Endothelial cell of umbilical vein (primary cell): ENCODE measurements at regions of chr6 and their contacts with region 1.

Region 1: DNA sequence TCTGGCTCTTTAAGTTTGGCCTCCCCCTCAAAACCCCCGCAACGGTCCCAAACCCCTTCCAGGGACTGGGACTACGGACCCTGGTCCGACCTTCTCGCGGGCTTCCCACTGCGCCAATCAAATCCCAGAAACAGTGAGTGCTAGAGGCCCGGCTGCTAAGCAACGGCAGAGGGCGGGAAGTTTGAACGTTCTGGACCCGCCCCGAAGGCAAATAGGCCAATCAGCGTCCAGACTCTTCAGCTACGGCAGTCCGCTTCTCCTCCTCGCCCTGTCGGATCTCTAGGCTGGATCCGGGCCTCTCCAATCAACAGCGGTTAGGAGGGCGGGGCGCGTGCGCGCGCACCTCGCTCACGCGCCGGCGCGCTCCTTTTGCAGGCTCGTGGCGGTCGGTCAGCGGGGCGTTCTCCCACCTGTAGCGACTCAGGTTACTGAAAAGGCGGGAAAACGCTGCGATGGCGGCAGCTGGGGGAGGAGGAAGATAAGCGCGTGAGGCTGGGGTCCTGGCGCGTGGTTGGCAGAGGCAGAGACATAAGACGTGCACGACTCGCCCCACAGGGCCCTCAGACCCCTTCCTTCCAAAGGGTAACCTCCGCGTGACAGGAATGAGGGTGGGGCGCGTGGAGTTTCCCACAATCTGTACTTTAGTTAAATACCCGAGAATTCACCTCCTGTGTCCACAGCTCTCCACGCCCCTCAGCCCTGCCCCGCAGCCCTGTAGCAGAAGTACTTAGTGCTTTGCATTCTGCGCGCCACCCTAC is at the start of gene MSH5:
- DNase-seq: peak; percentile 100
- H3K4me3 ChIP-seq: peak within 1 kb of the TSS; percentile 23 to 76 (median 61)
- H3K27ac ChIP-seq: peak within 1 kb of the TSS; percentile 94
- H3K4me1 ChIP-seq: peaks cover 31% of the 10 kb centered on the region
- H3K27me3 ChIP-seq: no peaks in the 10 kb centered on the region
- CTCF ChIP-seq: no peak
- POLR2A ChIP-seq: peak; percentile 65
- total RNA-seq, gene MSH5: 43.2 and 43.8 TPM in 2 replicates

Region 2: DNA sequence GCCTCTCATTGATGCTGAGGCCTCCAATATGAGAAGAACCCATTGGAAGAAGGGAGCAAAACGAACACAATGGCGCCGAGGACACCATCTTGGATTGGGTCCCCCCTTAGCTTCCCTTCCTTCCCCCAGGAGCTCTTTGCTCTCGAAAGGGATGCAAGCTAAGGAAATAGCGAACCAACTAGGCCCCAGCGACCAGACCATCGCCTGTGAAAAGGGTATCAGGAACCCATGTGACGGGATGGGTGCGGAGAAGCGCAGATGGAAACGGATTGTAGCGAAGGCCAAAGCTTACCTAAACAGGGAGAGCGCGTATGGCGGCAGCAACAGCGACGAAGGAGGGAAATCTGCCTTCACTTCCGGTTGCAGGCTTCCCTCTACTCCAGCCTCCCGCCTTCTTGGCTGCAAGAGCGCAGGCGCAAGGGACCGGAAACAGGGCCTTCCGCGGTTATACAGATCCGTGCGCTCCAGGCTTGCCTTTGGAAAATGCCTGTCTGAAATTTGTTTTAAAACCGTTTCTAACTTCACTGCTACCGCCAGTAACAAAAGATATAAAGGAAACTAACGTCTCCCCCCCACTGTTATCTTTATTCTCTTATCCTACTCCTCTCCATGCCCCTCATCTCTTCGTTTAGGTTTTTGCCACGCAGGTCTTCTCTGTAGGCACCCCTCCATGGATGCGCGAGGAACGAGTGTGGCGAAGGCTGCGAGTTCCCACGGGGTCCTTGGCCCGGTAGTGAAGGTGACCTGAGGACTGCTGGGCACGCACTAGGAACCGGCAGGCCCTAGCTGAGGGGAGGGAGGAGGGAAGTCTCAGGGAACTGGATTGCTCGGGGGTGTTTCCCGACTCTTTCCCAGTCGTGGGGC is 197.9 kb before region 1 on chr6 and contains the start of gene DDX39B:
- CTCF ChIA-PET with region 1: no interaction called
- POLR2A ChIA-PET with region 1: no interaction called
- dilution Hi-C with region 1: no loop called
- intact Hi-C with region 1: loop called (anchors 10 kb)
- DNase-seq: peak; percentile 97
- H3K4me3 ChIP-seq: peak within 1 kb of the TSS; percentile 59 to 95 (median 80)
- H3K27ac ChIP-seq: peak within 1 kb of the TSS; percentile 85
- H3K4me1 ChIP-seq: peaks cover 28% of the 10 kb centered on the region
- H3K27me3 ChIP-seq: no peaks in the 10 kb centered on the region
- CTCF ChIP-seq: no peak
- POLR2A ChIP-seq: peak; percentile 96
- total RNA-seq, gene DDX39B: 453 and 481 TPM in 2 replicates

Region 3: GRCh38 chr6:31652925-31653718 is 86.7 kb before region 1 on chr6:
- CTCF ChIA-PET with region 1: interaction called, 3 read pairs
- POLR2A ChIA-PET with region 1: no interaction called
- dilution Hi-C with region 1: no loop called
- intact Hi-C with region 1: loop called (anchors 2 kb)
- DNase-seq: no peak
- H3K4me3 ChIP-seq: peak overlapping the region; percentile 23 to 80 (median 62)
- H3K27ac ChIP-seq: peak overlapping the region; percentile 83
- H3K4me1 ChIP-seq: peaks cover 23% of the 10 kb centered on the region
- H3K27me3 ChIP-seq: no peaks in the 10 kb centered on the region
- CTCF ChIP-seq: no peak
- POLR2A ChIP-seq: no peak

Region 4: DNA sequence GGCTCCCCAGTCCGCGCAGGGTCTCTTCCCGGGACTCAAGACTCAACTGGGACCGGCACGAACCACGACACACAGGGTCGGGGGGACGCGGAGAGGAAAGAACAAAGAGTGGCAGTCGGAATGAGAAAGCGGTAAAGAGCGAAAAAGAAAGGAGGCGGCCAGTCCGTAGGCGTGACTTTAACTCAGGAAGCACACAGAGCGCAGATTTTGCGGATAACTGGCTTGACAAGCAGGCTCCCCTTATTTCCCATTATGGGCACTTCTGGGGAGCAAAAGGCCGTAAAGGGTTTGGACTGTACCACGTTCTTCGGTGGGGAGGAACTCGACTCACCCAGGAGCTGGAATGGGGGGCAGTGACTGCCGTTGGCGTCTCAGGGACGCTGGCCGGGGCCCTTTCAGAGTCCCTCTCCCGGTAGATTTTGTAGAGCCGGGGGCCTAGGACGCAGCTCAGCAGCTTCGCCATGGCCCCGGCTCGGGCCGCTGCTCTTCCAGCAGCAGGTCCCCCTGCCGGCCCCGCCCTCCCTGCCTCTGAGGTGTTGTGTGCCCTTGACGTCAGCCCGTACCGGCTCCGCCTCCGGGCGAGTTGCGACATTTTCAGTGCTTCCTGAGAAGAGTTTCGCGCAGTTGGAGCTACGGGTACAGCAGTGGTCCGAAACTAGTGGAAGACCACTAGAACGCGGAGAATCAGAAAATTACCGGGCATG is 36.8 kb before region 1 on chr6 and contains the start of gene ABHD16A:
- CTCF ChIA-PET with region 1: interaction called, 3 read pairs
- POLR2A ChIA-PET with region 1: interaction called, 5 read pairs
- dilution Hi-C with region 1: no loop called
- intact Hi-C with region 1: loop called (anchors 2 kb)
- DNase-seq: peak; percentile 99
- H3K4me3 ChIP-seq: peak within 1 kb of the TSS; percentile 59 to 80 (median 74)
- H3K27ac ChIP-seq: peak within 1 kb of the TSS; percentile 77
- H3K4me1 ChIP-seq: peaks cover 11% of the 10 kb centered on the region
- H3K27me3 ChIP-seq: no peaks in the 10 kb centered on the region
- CTCF ChIP-seq: peak in 1 of 2 donors; percentile 3
- POLR2A ChIP-seq: peak; percentile 97
- total RNA-seq, gene ABHD16A: 41.3 and 48.9 TPM in 2 replicates

Region 5: DNA sequence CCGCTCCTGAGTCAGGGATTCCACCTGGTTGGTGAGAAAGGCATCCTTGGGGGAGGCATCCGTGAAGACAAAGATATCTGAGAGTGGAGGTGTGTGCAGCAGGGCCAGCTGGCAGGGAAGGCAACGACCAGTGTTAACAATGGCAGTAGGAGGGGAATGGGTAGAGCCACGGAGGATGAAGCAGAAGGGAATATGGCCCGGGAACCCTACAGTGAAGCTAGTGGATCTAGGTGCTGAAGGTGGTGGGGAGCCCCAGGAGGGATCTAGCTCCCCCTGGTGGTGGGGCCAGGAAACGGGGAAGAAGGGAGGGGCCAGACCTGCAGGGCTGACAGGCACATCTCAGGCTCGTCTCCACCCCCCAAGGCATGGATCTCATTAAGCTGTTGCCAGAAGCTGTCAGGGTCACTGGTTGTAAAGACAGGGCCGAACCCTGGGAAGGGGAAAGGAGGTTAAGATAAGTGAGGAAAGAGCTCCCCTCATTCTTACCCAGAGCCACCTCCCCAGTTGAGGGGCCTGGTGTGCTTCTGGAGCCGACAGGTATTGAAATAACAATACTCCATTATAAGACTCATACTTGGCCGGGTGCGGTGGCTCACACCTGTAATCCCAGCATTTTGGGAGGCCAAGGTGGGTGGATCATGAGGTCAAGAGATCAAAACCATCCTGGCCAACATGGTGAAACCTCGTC is 30.0 kb after region 1 on chr6:
- CTCF ChIA-PET with region 1: interaction called, 55 read pairs
- POLR2A ChIA-PET with region 1: interaction called, 4 read pairs
- dilution Hi-C with region 1: no loop called
- intact Hi-C with region 1: loop called (anchors 1 kb)
- DNase-seq: peak; percentile 66
- H3K4me3 ChIP-seq: no peak overlapping the region
- H3K27ac ChIP-seq: no peak overlapping the region
- H3K4me1 ChIP-seq: no peaks in the 10 kb centered on the region
- H3K27me3 ChIP-seq: no peaks in the 10 kb centered on the region
- CTCF ChIP-seq: peak; percentile 83 to 88
- POLR2A ChIP-seq: no peak

Region 6: DNA sequence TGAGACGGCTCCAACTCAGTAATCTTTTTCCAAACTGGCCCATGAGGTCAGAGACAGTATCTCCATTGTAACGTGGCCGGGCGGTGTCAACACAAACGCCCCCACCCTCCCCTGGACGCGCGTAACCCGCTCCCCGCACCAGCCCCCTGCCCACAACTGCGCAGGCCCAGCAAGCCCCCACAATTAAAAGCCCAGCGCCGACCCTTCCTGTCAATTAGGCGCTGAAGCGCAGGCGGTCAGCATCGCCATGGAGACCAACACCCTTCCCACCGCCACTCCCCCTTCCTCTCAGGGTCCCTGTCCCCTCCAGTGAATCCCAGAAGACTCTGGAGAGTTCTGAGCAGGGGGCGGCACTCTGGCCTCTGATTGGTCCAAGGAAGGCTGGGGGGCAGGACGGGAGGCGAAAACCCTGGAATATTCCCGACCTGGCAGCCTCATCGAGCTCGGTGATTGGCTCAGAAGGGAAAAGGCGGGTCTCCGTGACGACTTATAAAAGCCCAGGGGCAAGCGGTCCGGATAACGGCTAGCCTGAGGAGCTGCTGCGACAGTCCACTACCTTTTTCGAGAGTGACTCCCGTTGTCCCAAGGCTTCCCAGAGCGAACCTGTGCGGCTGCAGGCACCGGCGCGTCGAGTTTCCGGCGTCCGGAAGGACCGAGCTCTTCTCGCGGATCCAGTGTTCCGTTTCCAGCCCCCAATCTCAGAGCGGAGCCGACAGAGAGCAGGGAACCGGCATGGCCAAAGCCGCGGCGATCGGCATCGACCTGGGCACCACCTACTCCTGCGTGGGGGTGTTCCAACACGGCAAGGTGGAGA is 75.4 kb after region 1 on chr6 and contains the starts of genes HSPA1A and HSPA1L:
- CTCF ChIA-PET with region 1: interaction called, 3 read pairs
- POLR2A ChIA-PET with region 1: interaction called, 11 read pairs
- dilution Hi-C with region 1: no loop called
- intact Hi-C with region 1: no loop called
- DNase-seq: peak; percentile 97
- H3K4me3 ChIP-seq: peak within 1 kb of the TSS; percentile 42 to 84 (median 83)
- H3K27ac ChIP-seq: peak within 1 kb of the TSS; percentile 71
- H3K4me1 ChIP-seq: peaks cover 21% of the 10 kb centered on the region
- H3K27me3 ChIP-seq: no peaks in the 10 kb centered on the region
- CTCF ChIP-seq: no peak
- POLR2A ChIP-seq: peak; percentile 99
- total RNA-seq, gene HSPA1A: 55.6 and 58.3 TPM in 2 replicates
- total RNA-seq, gene HSPA1L: 0.74 and 0.77 TPM in 2 replicates